Panc1 (cell line): ENCODE measurements at regions of chr12 and their contacts with region 1.

Region 1: GRCh38 chr12:57771236-57771635 is 669 bp downstream of the METTL1 start:
- DNase-seq: no peak
- ATAC-seq: no peak
- H3K4me3 ChIP-seq: peak overlapping the region; percentile 81 to 94
- H3K27ac ChIP-seq: peak overlapping the region; percentile 96
- H3K4me1 ChIP-seq: peaks cover 16% of the 10 kb centered on the region
- H3K27me3 ChIP-seq: no peaks in the 10 kb centered on the region
- CTCF ChIP-seq: no peak

Region 2: DNA sequence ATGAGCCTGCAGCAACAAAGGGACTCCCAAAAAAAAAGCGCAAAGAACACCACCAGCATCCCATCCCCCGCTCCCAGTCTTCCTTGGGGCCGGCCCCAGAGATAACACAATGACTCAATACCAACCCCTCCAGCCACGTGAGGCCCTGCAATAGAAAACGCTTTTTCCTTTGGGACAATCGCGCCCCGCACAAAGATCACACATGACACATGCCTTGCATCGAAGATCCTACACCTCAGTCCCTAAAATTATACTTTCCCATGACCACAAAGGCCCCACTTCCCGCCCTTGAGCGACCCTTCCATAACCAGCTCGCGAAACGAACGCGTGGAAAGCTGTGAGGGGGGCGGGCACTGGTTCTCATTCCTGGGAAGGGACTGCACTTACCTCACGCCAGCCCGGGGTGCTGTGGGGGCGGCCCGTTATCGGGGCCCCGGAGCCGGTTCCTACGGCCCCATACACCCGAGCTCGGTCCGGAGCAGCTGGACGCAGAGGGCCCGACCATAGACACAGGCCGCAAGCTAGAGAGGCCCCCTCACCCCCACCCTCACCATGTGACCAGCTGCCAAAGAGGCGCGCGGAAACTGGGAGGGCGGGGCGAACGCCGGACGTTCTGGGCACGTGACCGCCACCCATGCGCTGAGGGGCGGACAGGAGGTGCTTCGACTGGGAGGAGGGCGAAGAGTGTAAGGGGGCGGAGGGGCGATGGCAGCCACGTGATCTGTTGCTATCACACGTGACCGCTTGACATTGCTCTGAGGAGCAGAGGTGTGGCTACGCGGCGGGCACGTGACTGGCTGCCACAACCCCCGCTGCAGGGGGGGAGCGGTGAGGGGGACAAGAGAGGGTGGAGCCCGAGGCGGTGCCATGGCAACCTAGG is 19.2 kb before region 1 on chr12 and contains the start of gene CDK4:
- CTCF ChIA-PET with region 1: interaction called, 5 read pairs
- POLR2A ChIA-PET with region 1: interaction called, 12 read pairs
- in situ Hi-C with region 1: no loop called
- intact Hi-C with region 1: no loop called
- DNase-seq: peak; percentile 97
- ATAC-seq: peak; percentile 87
- H3K4me3 ChIP-seq: peak within 1 kb of the TSS; percentile 85 to 98
- H3K27ac ChIP-seq: peak within 1 kb of the TSS; percentile 98
- H3K4me1 ChIP-seq: peaks cover 14% of the 10 kb centered on the region
- H3K27me3 ChIP-seq: peaks cover 9% of the 10 kb centered on the region
- CTCF ChIP-seq: no peak
- total RNA-seq, gene CDK4: 201 TPM

Region 3: DNA sequence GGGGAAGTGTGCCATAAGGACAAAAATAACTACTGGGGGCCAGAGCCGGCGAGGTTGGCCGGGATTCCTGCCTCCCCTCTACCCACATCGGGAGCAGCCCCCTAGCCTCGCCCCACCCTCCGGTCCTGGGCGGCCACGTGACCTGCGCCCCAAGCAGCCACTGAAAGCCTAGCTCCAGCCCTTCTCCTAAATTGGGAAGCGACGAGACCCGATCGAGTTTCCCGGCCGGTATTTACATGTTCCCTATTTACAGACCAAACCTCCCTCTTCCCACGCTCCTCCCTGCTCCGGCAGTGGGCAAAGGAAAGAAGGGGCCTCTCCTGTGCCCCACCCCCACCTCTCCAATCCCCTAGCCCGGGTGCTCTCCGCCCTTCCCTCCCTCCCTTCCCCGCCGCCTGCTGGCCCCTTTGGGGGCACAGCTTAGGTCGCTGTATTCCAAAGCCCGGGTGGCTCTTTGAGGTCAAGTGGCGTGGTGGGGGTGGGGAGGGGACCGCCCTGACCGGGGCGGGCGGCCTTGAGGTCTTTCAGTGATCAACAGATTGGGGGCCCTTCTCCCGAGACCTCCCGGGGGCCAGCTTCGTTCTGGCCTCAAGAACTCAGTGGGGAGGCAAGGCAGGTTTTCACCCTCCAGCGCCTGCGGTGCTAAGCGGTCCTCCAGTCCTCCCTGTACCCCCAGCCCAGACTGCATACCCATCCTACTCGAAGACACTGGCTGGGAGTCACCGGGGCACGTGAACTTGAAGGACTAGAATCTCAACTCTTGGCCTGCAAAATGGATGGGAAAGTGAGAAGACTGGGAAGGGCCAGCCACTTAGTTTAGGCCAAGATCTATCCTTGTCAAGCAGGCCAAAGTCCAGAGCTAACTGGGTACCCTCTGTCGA is 81.6 kb after region 1 on chr12:
- CTCF ChIA-PET with region 1: no interaction called
- POLR2A ChIA-PET with region 1: no interaction called
- in situ Hi-C with region 1: no loop called
- intact Hi-C with region 1: no loop called
- DNase-seq: no peak
- ATAC-seq: no peak
- H3K4me3 ChIP-seq: no peak overlapping the region
- H3K27ac ChIP-seq: no peak overlapping the region
- H3K4me1 ChIP-seq: peaks cover 2% of the 10 kb centered on the region; the same call in 1 of the 2 replicates
- H3K27me3 ChIP-seq: no peaks in the 10 kb centered on the region
- CTCF ChIP-seq: no peak

Region 4: DNA sequence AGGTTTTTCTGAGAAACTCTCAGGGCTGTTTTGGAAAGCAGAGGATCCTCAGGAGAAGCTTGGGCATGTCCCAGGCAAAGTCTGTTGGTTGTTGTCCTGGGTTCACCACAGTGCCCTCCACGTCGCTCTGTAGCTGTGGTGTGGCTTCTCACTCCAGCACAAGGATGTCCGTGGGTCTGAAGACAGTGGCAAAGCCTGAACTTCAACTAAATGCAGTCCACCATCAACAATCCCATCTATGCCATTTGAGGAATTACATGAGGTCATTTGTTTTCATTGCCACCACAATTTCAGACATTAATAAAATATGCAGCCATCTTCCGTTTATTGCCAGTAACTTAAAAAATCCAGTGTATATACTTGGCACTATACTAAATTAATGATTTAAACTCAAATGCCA is 876.9 kb after region 1 on chr12:
- CTCF ChIA-PET with region 1: no interaction called
- POLR2A ChIA-PET with region 1: no interaction called
- in situ Hi-C with region 1: no loop called
- intact Hi-C with region 1: no loop called
- DNase-seq: no peak
- ATAC-seq: no peak
- H3K4me3 ChIP-seq: no peak overlapping the region
- H3K27ac ChIP-seq: no peak overlapping the region
- H3K4me1 ChIP-seq: no peaks in the 10 kb centered on the region
- H3K27me3 ChIP-seq: no peaks in the 10 kb centered on the region
- CTCF ChIP-seq: no peak